ENCODE measurements at regions of chr2 and their contacts with region 1.

Region 1: GRCh38 chr2:55168221-55169154 is 63.6 kb downstream of the CLHC1 start:
- DNase-seq: peak in 1 of 2 experiments; percentile 61
- H3K4me3 ChIP-seq: no peak overlapping the region
- H3K4me3 Mint-ChIP-seq: no peak overlapping the region
- H3K27ac Mint-ChIP-seq: no peak overlapping the region
- H3K4me1 ChIP-seq: peaks cover 14% of the 10 kb centered on the region
- H3K4me1 Mint-ChIP-seq: peaks cover 17% of the 10 kb centered on the region
- H3K27me3 ChIP-seq: no peaks in the 10 kb centered on the region
- H3K27me3 Mint-ChIP-seq: no peaks in the 10 kb centered on the region
- CTCF ChIP-seq: peak; percentile 68 to 73

Region 2: GRCh38 chr2:54899576-54900200 is 268.8 kb before region 1 on chr2:
- CTCF ChIA-PET with region 1: interaction called, 14 read pairs
- POLR2A ChIA-PET with region 1: no interaction called
- intact Hi-C with region 1: loop called (anchors 1 kb)
- DNase-seq: peak in 1 of 2 experiments; percentile 50
- H3K4me3 ChIP-seq: no peak overlapping the region
- H3K4me3 Mint-ChIP-seq: no peak overlapping the region
- H3K27ac Mint-ChIP-seq: no peak overlapping the region
- H3K4me1 ChIP-seq: peaks cover 47% of the 10 kb centered on the region
- H3K4me1 Mint-ChIP-seq: peaks cover 22% of the 10 kb centered on the region
- H3K27me3 ChIP-seq: no peaks in the 10 kb centered on the region
- H3K27me3 Mint-ChIP-seq: no peaks in the 10 kb centered on the region
- CTCF ChIP-seq: peak; percentile 65 to 69

Region 3: DNA sequence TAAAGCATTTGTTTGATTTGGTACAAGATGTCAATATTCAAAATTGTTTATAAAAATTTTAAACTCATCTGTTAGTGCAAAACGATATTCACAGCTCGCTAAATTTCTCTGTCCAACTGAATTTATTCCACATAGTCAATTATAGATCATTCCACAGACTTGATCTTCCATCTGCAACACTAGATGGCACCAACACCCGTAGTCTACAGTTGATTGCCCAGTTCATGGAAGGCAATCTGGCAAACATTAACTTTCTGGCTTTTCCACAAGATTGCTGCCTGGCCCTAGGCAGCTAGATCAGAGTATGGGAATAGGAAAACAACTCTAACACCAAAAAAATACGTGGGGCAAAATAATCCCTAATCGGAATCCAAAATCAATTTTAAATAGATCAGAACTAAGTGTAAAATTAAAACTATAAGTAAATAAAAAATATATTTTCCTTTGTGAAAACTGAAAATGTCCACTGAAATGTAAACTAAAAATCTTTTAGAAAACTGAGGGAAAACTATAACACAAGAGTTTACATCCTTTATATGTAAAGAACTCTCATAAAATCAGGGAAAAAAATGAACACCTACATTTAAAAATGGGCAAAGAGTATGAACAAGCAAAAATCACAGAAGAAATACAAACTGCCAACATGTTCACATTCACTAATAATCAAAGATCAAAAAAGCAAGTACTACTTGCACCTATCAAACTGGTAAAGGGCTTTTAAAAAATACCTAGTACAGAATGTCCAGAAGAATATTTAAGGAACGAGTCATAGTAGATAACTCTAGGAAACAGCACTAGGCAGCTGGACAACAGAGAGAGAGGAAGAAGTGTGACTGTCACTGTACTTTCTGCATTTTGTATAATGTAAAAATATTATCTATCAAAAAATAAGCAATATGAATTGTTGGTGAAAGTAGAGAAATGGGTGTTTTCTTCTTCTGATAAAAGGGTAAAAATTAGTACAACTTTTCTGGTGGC is 153.2 kb before region 1 on chr2:
- CTCF ChIA-PET with region 1: interaction called, 8 read pairs
- POLR2A ChIA-PET with region 1: interaction called, 3 read pairs
- intact Hi-C with region 1: loop called (anchors 1 kb)
- DNase-seq: peak; percentile 77 to 81
- H3K4me3 ChIP-seq: no peak overlapping the region
- H3K4me3 Mint-ChIP-seq: peak overlapping the region; percentile 55
- H3K27ac Mint-ChIP-seq: peak overlapping the region; percentile 55
- H3K4me1 ChIP-seq: peaks cover 55% of the 10 kb centered on the region
- H3K4me1 Mint-ChIP-seq: peaks cover 37% of the 10 kb centered on the region
- H3K27me3 ChIP-seq: no peaks in the 10 kb centered on the region
- H3K27me3 Mint-ChIP-seq: no peaks in the 10 kb centered on the region
- CTCF ChIP-seq: peak; percentile 64 to 75

Region 4: DNA sequence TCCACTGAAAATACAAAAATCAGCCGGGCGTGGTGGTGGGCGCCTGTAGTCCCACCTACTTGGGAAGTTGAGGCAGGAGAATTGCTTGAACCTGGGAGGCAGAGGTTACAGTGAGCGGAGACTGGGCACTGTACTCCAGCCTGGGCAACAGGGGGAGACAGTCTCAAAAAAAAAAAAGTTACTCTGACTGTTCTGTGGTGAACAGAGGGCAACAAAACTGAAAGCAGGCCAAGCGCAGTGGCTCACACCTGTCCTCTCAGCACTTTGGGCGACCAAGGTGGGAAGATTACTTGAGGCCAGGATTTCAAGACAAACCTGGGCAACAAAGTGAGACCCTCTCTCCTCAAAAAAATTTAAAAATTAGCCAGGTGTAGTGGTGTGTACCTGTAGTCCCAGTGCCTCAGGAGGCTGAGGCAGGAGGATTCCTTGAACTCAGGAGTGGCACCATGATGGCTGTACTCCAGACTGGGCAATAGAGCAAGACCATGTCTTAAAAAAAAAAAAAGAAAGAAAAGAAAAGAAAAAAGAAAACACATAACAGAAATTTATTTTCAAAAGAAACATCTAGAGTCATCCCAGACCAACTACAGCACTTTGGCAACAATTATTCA is 104.7 kb before region 1 on chr2:
- CTCF ChIA-PET with region 1: no interaction called
- POLR2A ChIA-PET with region 1: no interaction called
- intact Hi-C with region 1: loop called (anchors 1 kb)
- DNase-seq: peak in 1 of 2 experiments; percentile 17
- H3K4me3 ChIP-seq: no peak overlapping the region
- H3K4me3 Mint-ChIP-seq: no peak overlapping the region
- H3K27ac Mint-ChIP-seq: no peak overlapping the region
- H3K4me1 ChIP-seq: no peaks in the 10 kb centered on the region
- H3K4me1 Mint-ChIP-seq: no peaks in the 10 kb centered on the region
- H3K27me3 ChIP-seq: no peaks in the 10 kb centered on the region
- H3K27me3 Mint-ChIP-seq: no peaks in the 10 kb centered on the region
- CTCF ChIP-seq: peak in 1 of 2 experiments; percentile 14

Region 5: DNA sequence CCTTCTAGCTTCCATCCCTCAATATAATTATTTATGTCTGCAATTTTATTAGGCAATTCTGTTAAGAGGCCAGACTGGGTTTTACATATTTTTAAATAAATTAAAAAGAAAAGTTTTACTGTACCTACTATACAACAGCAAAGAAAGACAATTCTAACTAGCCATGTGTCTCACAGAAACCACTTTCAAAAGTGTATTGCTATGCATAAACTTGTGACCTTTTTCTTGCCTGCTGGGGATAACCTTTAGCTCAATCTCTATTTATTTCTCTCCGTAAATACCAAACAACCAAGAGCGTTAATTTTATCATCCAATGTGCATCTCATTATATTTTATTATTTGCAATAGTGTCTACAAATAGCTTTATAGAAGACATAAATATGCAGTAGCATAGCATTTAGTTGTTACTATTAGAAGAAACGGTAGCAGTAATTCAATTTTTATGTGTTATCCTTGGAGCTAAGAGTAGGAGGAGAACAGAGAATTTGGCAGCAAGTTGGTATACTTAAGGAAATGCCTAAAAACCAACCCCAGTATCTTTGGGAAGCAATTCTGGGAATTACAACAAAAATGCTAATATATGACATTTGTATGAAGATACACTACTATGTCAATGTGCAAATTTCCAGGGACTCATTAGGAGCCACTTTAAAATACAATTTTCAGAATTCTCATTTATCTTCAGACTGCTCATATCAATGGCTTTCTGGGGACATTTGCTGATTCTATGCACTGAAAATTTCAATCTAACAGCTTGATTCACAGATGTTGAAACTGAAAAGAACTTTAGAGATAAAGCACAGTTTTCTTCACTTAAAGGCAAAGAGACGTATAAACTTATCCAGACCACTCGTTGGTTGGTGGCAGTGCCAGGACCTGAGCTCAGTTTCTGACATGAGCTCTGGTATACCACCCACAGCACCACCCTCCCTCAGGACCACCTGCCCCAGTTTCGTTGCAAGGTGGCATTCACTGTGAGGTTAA is 95.2 kb before region 1 on chr2:
- CTCF ChIA-PET with region 1: interaction called, 3 read pairs
- POLR2A ChIA-PET with region 1: no interaction called
- intact Hi-C with region 1: loop called (anchors 2 kb)
- DNase-seq: no peak
- H3K4me3 ChIP-seq: no peak overlapping the region
- H3K4me3 Mint-ChIP-seq: no peak overlapping the region
- H3K27ac Mint-ChIP-seq: no peak overlapping the region
- H3K4me1 ChIP-seq: peaks cover 12% of the 10 kb centered on the region
- H3K4me1 Mint-ChIP-seq: peaks cover 8% of the 10 kb centered on the region
- H3K27me3 ChIP-seq: no peaks in the 10 kb centered on the region
- H3K27me3 Mint-ChIP-seq: no peaks in the 10 kb centered on the region
- CTCF ChIP-seq: no peak

Region 6: GRCh38 chr2:55093381-55093780 is 75.1 kb before region 1 on chr2:
- CTCF ChIA-PET with region 1: no interaction called
- POLR2A ChIA-PET with region 1: no interaction called
- intact Hi-C with region 1: no loop called
- DNase-seq: no peak
- H3K4me3 ChIP-seq: no peak overlapping the region
- H3K4me3 Mint-ChIP-seq: no peak overlapping the region
- H3K27ac Mint-ChIP-seq: no peak overlapping the region
- H3K4me1 ChIP-seq: peaks cover 18% of the 10 kb centered on the region
- H3K4me1 Mint-ChIP-seq: peaks cover 12% of the 10 kb centered on the region
- H3K27me3 ChIP-seq: no peaks in the 10 kb centered on the region
- H3K27me3 Mint-ChIP-seq: no peaks in the 10 kb centered on the region
- CTCF ChIP-seq: no peak

Region 7: GRCh38 chr2:55153584-55154295 is 14.7 kb before region 1 on chr2:
- CTCF ChIA-PET with region 1: interaction called, 6 read pairs
- POLR2A ChIA-PET with region 1: no interaction called
- intact Hi-C with region 1: loop called (anchors 1 kb)
- DNase-seq: no peak
- H3K4me3 ChIP-seq: no peak overlapping the region
- H3K4me3 Mint-ChIP-seq: no peak overlapping the region
- H3K27ac Mint-ChIP-seq: peak overlapping the region; percentile 82
- H3K4me1 ChIP-seq: peaks cover 59% of the 10 kb centered on the region
- H3K4me1 Mint-ChIP-seq: peaks cover 43% of the 10 kb centered on the region
- H3K27me3 ChIP-seq: no peaks in the 10 kb centered on the region
- H3K27me3 Mint-ChIP-seq: no peaks in the 10 kb centered on the region
- CTCF ChIP-seq: no peak

Measured in Caco-2 (cell line).